Thyroid gland (tissue), 4 donors: ENCODE measurements at regions of chr2 and their contacts with region 1.

Region 1: DNA sequence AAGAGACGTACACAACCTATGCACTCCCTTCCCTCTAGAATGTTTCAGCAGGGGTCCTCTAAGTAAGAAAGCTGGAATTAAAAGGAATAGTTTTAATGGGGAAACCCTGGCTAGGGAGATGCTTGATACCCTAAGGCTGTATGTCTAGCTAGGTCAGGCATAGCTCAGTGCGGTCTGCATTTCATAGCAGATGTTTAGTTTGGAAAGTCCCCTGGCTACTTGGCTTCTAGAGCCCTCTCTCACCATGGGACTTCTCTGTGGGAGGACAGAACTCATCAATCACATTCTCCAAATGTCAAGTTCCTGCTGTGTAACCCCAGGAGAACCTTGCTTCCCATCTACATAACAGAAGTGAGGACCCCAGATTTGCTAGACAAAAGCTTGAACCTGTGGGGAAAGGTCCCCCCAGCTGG is 24.1 kb upstream of the ANXA4 start:
- DNase-seq: no peak
- H3K4me3 ChIP-seq: no peak overlapping the region
- H3K27ac ChIP-seq: no peak overlapping the region
- H3K4me1 ChIP-seq: peaks cover 0 to 5% of the 10 kb centered on the region in 2 donors
- H3K27me3 ChIP-seq: no peaks in the 10 kb centered on the region
- CTCF ChIP-seq: no peak
- POLR2A ChIP-seq: no peak

Region 2: DNA sequence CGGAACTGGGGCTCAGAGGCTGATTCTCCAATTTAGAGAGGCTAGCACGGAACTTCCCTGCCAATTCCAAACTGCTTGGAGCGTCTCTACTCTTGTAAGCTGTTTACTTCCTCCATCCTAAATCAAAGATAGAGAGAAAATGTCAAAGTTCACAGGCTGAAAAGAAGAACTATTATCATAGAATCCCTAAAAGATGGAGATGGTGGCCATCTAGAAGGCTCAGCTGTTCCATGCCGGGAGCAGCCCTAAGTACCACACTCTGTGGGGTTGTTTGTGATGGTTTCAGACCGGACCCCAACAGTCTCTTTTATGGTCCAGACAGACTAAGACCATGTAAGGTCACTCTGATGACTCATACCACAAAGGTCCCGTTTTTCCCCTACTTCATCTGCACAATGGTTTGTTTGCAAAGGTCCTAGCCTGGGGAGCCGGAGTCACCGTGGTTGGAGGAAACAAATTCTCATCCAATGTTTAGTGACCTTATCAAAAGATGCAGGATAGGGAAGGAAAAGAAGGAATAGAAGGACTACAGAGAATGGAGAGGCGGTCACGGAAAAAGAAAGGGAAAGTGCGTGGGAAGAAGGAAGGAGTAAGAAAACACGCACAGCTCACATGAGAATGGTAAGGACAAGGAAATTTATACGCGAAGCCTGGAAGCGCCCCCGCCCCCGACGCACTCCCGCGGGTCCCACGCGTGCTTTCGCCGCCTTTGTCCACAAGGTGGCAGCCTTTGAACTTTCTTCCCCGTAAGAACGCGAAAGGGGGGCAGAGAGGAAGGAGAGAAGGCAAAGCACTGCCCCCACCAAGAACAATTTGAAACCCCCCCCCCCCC is 705.3 kb before region 1 on chr2:
- intact Hi-C with region 1: loop called (anchors 10 kb)
- DNase-seq: peak; percentile 65 to 75
- H3K4me3 ChIP-seq: peak overlapping the region; percentile 59 to 90 (median 82)
- H3K27ac ChIP-seq: peak overlapping the region in 2 of 3 donors; percentile 43 to 75
- H3K4me1 ChIP-seq: peaks cover 17 to 23% of the 10 kb centered on the region in 2 donors
- H3K27me3 ChIP-seq: no peaks in the 10 kb centered on the region
- CTCF ChIP-seq: peak; percentile 41 to 81 (median 68)
- POLR2A ChIP-seq: no peak

Region 3: GRCh38 chr2:69386789-69387734 is 330.8 kb before region 1 on chr2 and contains the start of gene GFPT1:
- intact Hi-C with region 1: loop called (anchors 10 kb)
- DNase-seq: peak; percentile 96
- H3K4me3 ChIP-seq: peak within 1 kb of the TSS; percentile 24 to 99 (median 94)
- H3K27ac ChIP-seq: peak within 1 kb of the TSS; percentile 72 to 87 (median 85)
- H3K4me1 ChIP-seq: peaks cover 13 to 15% of the 10 kb centered on the region in 2 donors
- H3K27me3 ChIP-seq: no peaks in the 10 kb centered on the region
- CTCF ChIP-seq: peak in 1 of 6 experiments; percentile 2
- POLR2A ChIP-seq: peak; percentile 37 to 94
- total RNA-seq, gene GFPT1: 56.7 to 125 (median 71.3) TPM

Region 4: DNA sequence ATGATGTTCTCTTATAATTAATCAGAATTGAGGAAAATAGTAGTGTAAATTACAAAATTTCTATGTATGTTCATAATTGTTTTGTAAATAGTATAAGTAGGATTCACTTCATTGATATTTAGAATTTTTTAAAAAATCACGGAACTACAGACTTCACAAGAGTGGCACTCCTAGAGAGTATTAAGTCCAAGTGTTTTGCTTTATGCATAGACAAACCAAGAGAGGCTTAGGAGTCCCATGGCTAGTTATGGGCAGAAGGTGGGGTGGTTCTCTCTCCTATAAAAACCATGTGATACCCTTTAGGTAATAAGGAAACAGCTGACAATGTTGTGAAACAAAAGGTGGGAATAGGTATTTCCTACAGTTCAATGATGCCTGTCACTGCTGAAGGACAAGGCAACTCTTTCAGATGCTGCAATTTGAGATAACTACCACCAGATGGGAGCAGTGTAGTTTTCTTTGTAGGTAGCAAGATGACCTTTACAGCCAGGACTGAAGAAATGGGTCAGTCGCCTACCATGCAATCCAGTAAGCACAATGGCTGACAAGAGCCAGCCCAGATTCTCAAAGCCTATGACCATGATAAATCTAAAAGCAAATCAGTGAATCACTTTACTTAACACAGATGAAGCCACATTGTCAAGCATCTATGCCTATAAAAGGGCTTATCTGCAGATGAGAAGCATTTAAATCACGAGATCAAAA is 158.3 kb before region 1 on chr2:
- intact Hi-C with region 1: loop called (anchors 5 kb)
- DNase-seq: no peak
- H3K4me3 ChIP-seq: no peak overlapping the region
- H3K27ac ChIP-seq: no peak overlapping the region
- H3K4me1 ChIP-seq: peaks cover 17 to 39% of the 10 kb centered on the region in 2 donors
- H3K27me3 ChIP-seq: no peaks in the 10 kb centered on the region
- CTCF ChIP-seq: peak in 4 of 6 experiments; percentile 61 to 78 (median 71)
- POLR2A ChIP-seq: no peak

Region 5: DNA sequence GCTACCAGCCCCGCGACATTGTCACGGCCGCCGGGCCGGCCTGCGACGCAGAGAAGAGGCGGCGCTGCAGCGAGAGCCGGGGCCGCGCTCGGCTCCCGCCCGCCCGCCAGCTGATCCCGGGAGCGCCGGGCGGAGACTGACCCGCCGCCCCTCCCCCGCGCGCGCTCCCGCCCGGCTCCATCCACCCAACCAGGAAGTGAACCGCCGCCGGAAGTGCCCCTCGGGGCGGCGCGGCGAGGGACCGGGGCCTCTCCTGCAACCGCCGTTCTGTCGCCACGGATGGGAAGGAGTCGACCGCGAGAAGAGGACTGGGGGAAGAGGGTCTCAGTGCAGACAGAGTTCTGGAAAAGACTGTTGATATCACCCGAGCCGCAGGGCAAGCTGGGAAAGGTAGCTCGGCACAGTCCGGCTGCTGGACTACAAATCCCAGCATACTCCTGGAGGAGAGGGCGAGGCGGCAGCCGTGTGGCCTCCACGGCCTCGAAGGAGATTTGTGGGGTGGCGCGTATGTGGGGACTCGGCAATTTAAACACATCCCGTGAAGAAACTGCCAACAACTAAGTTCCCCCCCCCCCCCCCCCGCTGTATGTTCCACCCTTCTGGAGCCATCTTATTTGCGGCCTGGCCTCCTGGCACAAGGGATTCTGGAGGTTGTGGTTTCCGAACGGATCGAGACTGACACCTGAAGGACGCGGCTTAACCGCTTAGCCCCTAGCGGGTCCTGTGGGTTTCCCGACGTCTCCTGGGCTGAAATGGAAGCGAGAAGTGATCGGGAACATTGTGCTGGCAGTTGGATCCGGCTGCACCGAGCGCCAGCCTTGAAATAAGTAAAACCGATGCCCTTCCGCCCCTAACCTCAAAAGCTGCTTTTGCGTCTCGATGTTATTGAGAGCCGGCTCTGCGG is 74.0 kb before region 1 on chr2 and contains the start of gene AAK1:
- intact Hi-C with region 1: loop called (anchors 10 kb)
- DNase-seq: peak; percentile 92 to 93
- H3K4me3 ChIP-seq: peak within 1 kb of the TSS; percentile 57 to 96 (median 93)
- H3K27ac ChIP-seq: peak within 1 kb of the TSS; percentile 96 to 99 (median 98)
- H3K4me1 ChIP-seq: peaks cover 19 to 39% of the 10 kb centered on the region in 2 donors
- H3K27me3 ChIP-seq: no peaks in the 10 kb centered on the region
- CTCF ChIP-seq: peak in 1 of 6 experiments; percentile 4
- POLR2A ChIP-seq: peak; percentile 22 to 96
- total RNA-seq, gene AAK1: 82.0 to 174 (median 144) TPM